ENCODE measurements at regions of chr17 and their contacts with region 1.

Region 1: DNA sequence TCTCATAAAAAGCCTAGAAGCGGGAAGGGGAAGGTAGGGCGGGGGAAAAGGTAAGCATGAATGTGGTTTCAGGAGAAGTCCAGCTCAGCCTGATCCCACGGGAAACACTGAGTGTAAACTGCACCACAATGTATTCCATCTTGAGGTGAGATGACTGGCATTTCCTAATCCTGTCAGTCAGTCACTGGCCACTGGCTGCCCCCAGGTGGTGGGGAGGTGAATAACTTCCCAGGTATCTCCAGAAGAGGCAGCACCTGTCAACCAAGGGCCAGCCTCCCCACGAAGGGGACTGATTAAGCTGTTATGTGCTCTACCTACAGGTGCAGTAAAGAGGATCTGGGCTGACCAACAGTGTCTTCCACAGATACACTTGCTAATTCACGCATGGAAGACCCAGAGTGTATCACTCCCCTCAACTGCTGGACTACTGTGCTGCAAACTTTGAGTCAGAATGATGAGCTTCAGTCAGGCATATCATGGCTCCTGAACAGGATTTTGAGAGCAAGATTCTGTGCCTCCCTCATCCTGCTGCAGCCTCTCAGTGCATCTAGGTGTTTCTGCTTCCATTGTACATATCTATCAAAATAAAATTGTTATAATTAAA is 108.5 kb upstream of the CCL2 start:
- DNase-seq: peak; percentile 37 to 80
- H3K4me3 ChIP-seq: no peak overlapping the region
- H3K27ac ChIP-seq: no peak overlapping the region
- H3K4me1 ChIP-seq: no peaks in the 10 kb centered on the region
- H3K27me3 ChIP-seq: peaks cover 0 to 4% of the 10 kb centered on the region in 2 donors
- CTCF ChIP-seq: peak in 2 of 3 donors; percentile 74 to 83
- POLR2A ChIP-seq: no peak

Region 2: GRCh38 chr17:34465789-34466188 is 319.2 kb after region 1 on chr17:
- intact Hi-C with region 1: loop called (anchors 10 kb)
- DNase-seq: no peak
- H3K4me3 ChIP-seq: no peak overlapping the region
- H3K27ac ChIP-seq: no peak overlapping the region
- H3K4me1 ChIP-seq: no peaks in the 10 kb centered on the region
- H3K27me3 ChIP-seq: peaks cover 0 to 40% of the 10 kb centered on the region in 2 donors
- CTCF ChIP-seq: no peak
- POLR2A ChIP-seq: no peak